ENCODE measurements at regions of chr11 and their contacts with region 1.

Region 1: DNA sequence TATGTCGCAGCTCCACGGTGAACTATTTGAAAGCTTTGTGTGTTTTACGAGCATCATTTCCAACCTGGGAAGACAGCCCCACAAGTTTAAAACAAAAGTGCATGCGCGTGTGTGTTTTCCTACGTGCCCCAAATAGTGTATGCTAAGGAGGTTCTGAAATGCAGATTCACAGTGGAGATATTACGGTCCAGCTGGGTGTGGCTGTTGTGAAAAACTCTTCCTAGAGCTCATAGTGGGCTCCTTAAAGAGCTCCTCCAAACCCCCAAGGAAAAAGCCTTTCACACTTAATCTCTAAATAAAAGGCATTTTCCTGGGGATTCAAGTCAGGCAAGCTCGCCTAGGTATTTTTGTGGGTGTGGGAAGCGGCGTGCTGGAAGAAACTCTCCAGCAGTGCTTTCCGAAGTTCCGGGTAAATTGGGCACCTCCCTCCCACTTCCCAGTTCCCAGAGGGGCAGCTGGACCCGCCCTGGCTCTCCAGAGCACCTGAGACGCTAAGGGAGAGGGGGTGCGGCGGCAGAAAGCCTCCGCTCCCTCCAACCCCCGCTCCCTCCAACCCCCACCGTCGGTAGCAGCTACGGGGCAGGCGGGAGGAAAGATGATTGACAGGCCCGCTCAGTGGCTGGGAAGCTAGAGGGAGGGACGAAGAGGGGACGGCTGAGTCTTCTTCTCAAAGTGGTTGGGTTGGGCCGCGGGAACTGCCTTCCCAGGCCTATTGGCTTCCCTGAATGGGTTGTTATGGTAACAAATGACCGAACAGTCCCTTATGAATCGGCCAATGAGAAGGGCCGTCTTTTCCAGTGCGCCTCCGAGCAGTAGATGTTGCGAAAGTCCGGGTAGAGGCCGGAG is 558 bp upstream of the PCF11 start:
- DNase-seq: no peak
- ATAC-seq: peak; percentile 91
- H3K4me3 Mint-ChIP-seq: peak overlapping the region; percentile 100
- H3K27ac Mint-ChIP-seq: peak overlapping the region; percentile 100
- H3K4me1 Mint-ChIP-seq: peaks cover 29% of the 10 kb centered on the region
- H3K27me3 Mint-ChIP-seq: no peaks in the 10 kb centered on the region

Region 2: DNA sequence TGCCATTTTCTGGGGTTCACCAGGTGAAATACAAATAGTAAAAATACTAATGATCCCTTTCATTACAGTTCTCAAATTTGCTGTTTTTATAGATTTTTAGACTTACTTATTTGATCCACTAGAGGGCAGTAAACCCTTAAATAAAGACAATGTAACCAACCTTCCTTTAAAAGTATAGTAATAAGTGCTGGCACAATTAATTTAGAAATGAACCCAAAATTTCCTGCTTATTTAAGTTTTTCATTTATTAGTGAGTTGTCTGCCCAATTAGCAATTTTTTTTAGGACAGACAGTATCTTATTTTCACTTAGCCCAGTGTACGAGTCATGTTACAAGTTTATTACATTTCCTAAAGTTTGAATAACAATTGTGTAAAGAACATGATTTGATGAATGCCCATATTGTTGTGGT is 250.1 kb before region 1 on chr11:
- POLR2A ChIA-PET with region 1: interaction called, 43 read pairs
- DNase-seq: no peak
- ATAC-seq: no peak
- H3K4me3 Mint-ChIP-seq: no peak overlapping the region
- H3K27ac Mint-ChIP-seq: no peak overlapping the region
- H3K4me1 Mint-ChIP-seq: peaks cover 42% of the 10 kb centered on the region
- H3K27me3 Mint-ChIP-seq: no peaks in the 10 kb centered on the region

Region 3: DNA sequence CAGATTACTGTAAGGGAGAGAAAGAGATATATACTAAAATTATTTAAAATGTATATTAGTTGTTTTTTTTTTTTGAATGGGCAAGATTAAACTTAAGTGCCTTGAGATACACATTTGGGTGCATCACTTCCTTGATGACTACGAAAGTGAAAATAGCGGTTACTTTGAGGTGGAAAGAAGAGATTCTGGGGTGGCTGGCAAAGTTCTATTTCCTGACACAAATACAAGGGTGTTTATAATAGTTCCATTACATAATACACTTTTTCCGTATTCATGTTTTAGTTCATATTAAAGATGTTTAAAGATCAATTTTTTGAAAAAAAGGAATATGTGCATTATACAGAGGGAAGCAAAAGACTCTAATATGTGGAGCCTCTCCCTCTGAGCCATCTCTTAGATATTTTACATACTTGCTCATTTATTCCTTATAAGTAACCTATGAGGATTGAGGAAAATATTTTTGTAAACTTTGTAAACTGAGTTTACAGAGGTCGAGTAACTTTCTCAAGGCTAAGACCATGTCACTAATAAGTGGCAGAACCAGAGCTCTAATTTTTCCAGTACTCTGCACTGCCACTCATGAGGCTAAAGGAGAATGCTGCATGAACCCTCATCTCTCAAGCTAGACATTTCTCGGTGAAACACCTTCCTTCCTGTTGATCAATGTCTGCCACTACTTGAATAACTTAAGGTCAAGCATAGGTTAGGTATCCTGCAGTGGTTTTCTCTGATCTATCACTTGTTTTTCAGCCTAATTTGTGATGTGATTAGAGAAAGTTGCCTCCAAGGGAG is 196.2 kb before region 1 on chr11:
- POLR2A ChIA-PET with region 1: interaction called, 13 read pairs
- DNase-seq: no peak
- ATAC-seq: peak; percentile 81
- H3K4me3 Mint-ChIP-seq: peak overlapping the region; percentile 76
- H3K27ac Mint-ChIP-seq: peak overlapping the region; percentile 82
- H3K4me1 Mint-ChIP-seq: peaks cover 59% of the 10 kb centered on the region
- H3K27me3 Mint-ChIP-seq: no peaks in the 10 kb centered on the region

Region 4: GRCh38 chr11:83071567-83072349 is 84.6 kb before region 1 on chr11 and contains the start of gene RAB30:
- POLR2A ChIA-PET with region 1: interaction called, 56 read pairs
- DNase-seq: peak; percentile 84
- ATAC-seq: peak; percentile 98
- H3K4me3 Mint-ChIP-seq: no peak within 1 kb of the TSS
- H3K27ac Mint-ChIP-seq: no peak within 1 kb of the TSS
- H3K4me1 Mint-ChIP-seq: peaks cover 34% of the 10 kb centered on the region
- H3K27me3 Mint-ChIP-seq: no peaks in the 10 kb centered on the region
- total RNA-seq, gene RAB30: 11.9 to 14.3 TPM

Region 5: GRCh38 chr11:83193315-83194280 is 37.2 kb after region 1 on chr11 and contains the start of gene ANKRD42:
- POLR2A ChIA-PET with region 1: interaction called, 26 read pairs
- DNase-seq: peak; percentile 82
- ATAC-seq: peak; percentile 72
- H3K4me3 Mint-ChIP-seq: peak within 1 kb of the TSS; percentile 94
- H3K27ac Mint-ChIP-seq: peak within 1 kb of the TSS; percentile 94
- H3K4me1 Mint-ChIP-seq: peaks cover 30% of the 10 kb centered on the region
- H3K27me3 Mint-ChIP-seq: no peaks in the 10 kb centered on the region
- total RNA-seq, gene ANKRD42: 6.2 to 7.4 TPM

Region 6: DNA sequence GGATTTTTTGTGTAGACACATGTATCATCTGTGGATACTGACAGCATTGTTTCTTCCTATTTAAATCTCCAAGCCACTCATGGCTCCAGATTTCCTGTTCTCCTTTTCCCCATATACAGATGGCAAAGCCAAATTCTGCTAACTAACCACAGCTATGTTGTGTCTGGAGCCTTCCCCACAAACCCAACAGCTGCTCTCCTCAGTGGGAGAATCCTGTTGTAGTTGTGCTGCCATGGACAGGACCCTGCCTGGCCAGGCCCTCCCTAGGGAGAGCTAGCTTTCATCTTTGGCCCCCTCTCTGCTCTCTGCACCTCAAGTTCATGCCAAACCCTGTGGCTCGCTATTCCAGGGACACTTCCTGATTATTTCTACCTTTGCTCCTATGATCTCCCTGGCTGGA is 236.2 kb after region 1 on chr11:
- POLR2A ChIA-PET with region 1: no interaction called
- DNase-seq: no peak
- ATAC-seq: no peak
- H3K4me3 Mint-ChIP-seq: no peak overlapping the region
- H3K27ac Mint-ChIP-seq: no peak overlapping the region
- H3K4me1 Mint-ChIP-seq: no peaks in the 10 kb centered on the region
- H3K27me3 Mint-ChIP-seq: no peaks in the 10 kb centered on the region

Measured in activated naive CD8-positive, alpha-beta T cell treated with anti-CD3 and anti-CD28 coated beads, Interleukin-2, amount 10 ng/mL, durations not matched to agents 7 days and 5 days (primary cell).